ENCODE measurements at regions of chr1 and their contacts with region 1.

Region 1: GRCh38 chr1:62407405-62408009 is 29.3 kb upstream of the USP1 start:
- DNase-seq: peak; percentile 55
- ATAC-seq: peak; percentile 89
- H3K4me3 ChIP-seq: no peak overlapping the region
- H3K27ac ChIP-seq: no peak overlapping the region
- H3K4me1 ChIP-seq: no peaks in the 10 kb centered on the region
- H3K27me3 ChIP-seq: peaks cover 8% of the 10 kb centered on the region
- CTCF ChIP-seq: peak; percentile 79
- POLR2A ChIP-seq: no peak
- RAD21 ChIP-seq: peak; percentile 81

Region 2: GRCh38 chr1:62175568-62176179 is 231.8 kb before region 1 on chr1:
- CTCF ChIA-PET with region 1: interaction called, 5 read pairs
- POLR2A ChIA-PET with region 1: no interaction called
- dilution Hi-C with region 1: no loop called
- in situ Hi-C with region 1: loop called (anchors 5 kb)
- intact Hi-C with region 1: loop called (anchors 1 kb)
- DNase-seq: peak; percentile 45
- ATAC-seq: peak; percentile 66
- H3K4me3 ChIP-seq: no peak overlapping the region
- H3K27ac ChIP-seq: no peak overlapping the region
- H3K4me1 ChIP-seq: no peaks in the 10 kb centered on the region
- H3K27me3 ChIP-seq: no peaks in the 10 kb centered on the region; the same call in none of the 2 replicates
- CTCF ChIP-seq: peak; percentile 79
- POLR2A ChIP-seq: no peak
- RAD21 ChIP-seq: peak; percentile 71

Region 3: DNA sequence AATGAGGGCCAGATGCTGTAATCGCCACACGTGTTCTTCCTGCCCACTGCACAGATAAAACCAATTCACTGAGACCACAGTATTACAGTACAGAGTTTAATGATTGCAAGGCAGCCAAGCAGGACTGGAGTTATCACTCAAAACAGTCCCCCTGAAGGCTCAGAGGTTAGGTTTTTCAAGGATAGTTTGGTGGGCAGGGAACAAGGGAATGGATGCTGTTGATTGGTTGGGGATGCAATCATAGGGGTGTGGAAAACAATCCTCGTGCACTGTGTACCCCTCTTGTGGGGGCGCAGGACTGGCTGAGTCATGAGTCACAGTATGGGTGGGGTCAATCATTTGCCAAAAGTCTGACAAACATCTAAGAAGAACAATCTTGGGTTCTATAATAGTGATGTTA is 16.9 kb after region 1 on chr1:
- CTCF ChIA-PET with region 1: no interaction called
- POLR2A ChIA-PET with region 1: no interaction called
- dilution Hi-C with region 1: no loop called
- in situ Hi-C with region 1: no loop called
- intact Hi-C with region 1: no loop called
- DNase-seq: no peak
- ATAC-seq: no peak
- H3K4me3 ChIP-seq: no peak overlapping the region
- H3K27ac ChIP-seq: no peak overlapping the region
- H3K4me1 ChIP-seq: no peaks in the 10 kb centered on the region
- H3K27me3 ChIP-seq: no peaks in the 10 kb centered on the region
- CTCF ChIP-seq: no peak
- POLR2A ChIP-seq: no peak
- RAD21 ChIP-seq: no peak

Region 4: GRCh38 chr1:62516600-62516999 is 109.1 kb after region 1 on chr1:
- CTCF ChIA-PET with region 1: no interaction called
- POLR2A ChIA-PET with region 1: no interaction called
- dilution Hi-C with region 1: no loop called
- in situ Hi-C with region 1: no loop called
- intact Hi-C with region 1: no loop called
- DNase-seq: peak; percentile 30
- ATAC-seq: no peak
- H3K4me3 ChIP-seq: no peak overlapping the region
- H3K27ac ChIP-seq: no peak overlapping the region
- H3K4me1 ChIP-seq: no peaks in the 10 kb centered on the region
- H3K27me3 ChIP-seq: no peaks in the 10 kb centered on the region
- CTCF ChIP-seq: no peak
- POLR2A ChIP-seq: no peak
- RAD21 ChIP-seq: no peak